Ovary (tissue), 10 donors: ENCODE measurements at regions of chr15 and their contacts with region 1.

Region 1: DNA sequence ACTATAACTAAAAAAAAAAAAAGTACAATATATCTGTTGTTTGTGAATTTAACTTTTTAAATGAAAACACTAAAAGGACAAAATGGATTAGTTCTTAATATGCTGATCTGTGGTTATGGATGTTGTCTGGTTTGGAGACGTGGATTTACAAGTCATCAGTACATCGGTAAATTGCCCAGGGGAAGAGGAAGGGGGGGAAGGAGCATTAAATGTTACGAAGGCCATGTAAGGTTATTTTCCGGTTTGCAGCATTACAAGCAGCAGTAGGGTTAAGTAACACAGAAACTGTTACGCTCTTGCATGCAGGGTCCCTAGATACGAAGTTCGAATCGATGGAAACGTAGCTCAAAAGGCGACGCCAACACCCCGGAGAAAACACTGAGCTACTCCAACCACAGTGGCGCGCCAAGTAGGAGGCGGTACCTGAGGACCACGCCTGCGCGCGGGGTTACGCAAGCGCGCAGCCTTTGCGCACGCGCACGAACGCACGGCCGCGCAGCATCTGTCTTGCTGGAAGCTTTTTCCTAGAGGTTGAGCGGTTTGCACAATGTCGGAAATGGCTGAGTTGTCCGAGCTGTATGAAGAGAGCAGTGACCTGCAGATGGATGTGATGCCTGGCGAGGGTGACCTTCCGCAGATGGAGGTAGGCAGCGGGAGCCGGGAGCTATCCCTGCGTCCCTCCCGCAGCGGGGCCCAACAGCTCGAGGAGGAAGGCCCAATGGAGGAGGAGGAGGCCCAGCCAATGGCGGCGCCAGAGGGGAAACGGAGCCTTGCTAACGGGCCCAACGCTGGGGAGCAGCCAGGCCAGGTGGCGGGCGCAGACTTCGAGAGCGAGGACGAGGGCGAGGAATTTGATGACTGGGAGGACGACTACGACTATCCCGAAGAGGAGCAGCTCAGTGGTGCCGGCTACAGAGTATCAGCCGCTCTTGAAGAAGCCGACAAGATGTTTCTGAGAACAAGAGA is at the start of gene EID1:
- DNase-seq: peak; percentile 91 to 96 (median 94)
- H3K4me3 ChIP-seq: peak within 1 kb of the TSS; percentile 77
- H3K27ac ChIP-seq: peak within 1 kb of the TSS; percentile 57 to 79
- H3K4me1 ChIP-seq: no peaks in the 10 kb centered on the region
- H3K27me3 ChIP-seq: no peaks in the 10 kb centered on the region
- CTCF ChIP-seq: peak in 1 of 3 donors; percentile 13
- EP300 ChIP-seq: no peak
- POLR2A ChIP-seq: peak; percentile 92
- total RNA-seq, gene EID1: 151 to 256 (median 219) TPM

Region 2: GRCh38 chr15:48582452-48583247 is 295.3 kb before region 1 on chr15:
- intact Hi-C with region 1: no loop called
- DNase-seq: no peak
- H3K4me3 ChIP-seq: no peak overlapping the region
- H3K27ac ChIP-seq: no peak overlapping the region
- H3K4me1 ChIP-seq: peaks cover 10% of the 10 kb centered on the region
- H3K27me3 ChIP-seq: no peaks in the 10 kb centered on the region
- CTCF ChIP-seq: no peak
- EP300 ChIP-seq: no peak
- POLR2A ChIP-seq: no peak

Region 3: GRCh38 chr15:48810414-48811317 is 67.2 kb before region 1 on chr15 and contains the start of gene CEP152:
- intact Hi-C with region 1: loop called in 1 of 4 experiments (anchors 2 kb)
- DNase-seq: peak; percentile 97 to 99 (median 98)
- H3K4me3 ChIP-seq: peak within 1 kb of the TSS; percentile 53
- H3K27ac ChIP-seq: peak within 1 kb of the TSS in 1 of 2 donors; percentile 19
- H3K4me1 ChIP-seq: peaks cover 2% of the 10 kb centered on the region
- H3K27me3 ChIP-seq: no peaks in the 10 kb centered on the region
- CTCF ChIP-seq: no peak
- EP300 ChIP-seq: no peak
- POLR2A ChIP-seq: no peak
- total RNA-seq, gene CEP152: 1.7 to 3.7 (median 2.5) TPM

Region 4: GRCh38 chr15:48946088-48946839 is 68.4 kb after region 1 on chr15:
- intact Hi-C with region 1: no loop called
- DNase-seq: no peak
- H3K4me3 ChIP-seq: no peak overlapping the region
- H3K27ac ChIP-seq: no peak overlapping the region
- H3K4me1 ChIP-seq: no peaks in the 10 kb centered on the region
- H3K27me3 ChIP-seq: no peaks in the 10 kb centered on the region
- CTCF ChIP-seq: no peak
- EP300 ChIP-seq: no peak
- POLR2A ChIP-seq: no peak